Sciatic nerve (tissue), 2 donors: ENCODE measurements at regions of chr10 and their contacts with region 1.

Region 1: GRCh38 chr10:124612611-124613498 is 131.3 kb downstream of the FAM53B start:
- DNase-seq: no peak
- ATAC-seq: peak; percentile 68

Region 2: DNA sequence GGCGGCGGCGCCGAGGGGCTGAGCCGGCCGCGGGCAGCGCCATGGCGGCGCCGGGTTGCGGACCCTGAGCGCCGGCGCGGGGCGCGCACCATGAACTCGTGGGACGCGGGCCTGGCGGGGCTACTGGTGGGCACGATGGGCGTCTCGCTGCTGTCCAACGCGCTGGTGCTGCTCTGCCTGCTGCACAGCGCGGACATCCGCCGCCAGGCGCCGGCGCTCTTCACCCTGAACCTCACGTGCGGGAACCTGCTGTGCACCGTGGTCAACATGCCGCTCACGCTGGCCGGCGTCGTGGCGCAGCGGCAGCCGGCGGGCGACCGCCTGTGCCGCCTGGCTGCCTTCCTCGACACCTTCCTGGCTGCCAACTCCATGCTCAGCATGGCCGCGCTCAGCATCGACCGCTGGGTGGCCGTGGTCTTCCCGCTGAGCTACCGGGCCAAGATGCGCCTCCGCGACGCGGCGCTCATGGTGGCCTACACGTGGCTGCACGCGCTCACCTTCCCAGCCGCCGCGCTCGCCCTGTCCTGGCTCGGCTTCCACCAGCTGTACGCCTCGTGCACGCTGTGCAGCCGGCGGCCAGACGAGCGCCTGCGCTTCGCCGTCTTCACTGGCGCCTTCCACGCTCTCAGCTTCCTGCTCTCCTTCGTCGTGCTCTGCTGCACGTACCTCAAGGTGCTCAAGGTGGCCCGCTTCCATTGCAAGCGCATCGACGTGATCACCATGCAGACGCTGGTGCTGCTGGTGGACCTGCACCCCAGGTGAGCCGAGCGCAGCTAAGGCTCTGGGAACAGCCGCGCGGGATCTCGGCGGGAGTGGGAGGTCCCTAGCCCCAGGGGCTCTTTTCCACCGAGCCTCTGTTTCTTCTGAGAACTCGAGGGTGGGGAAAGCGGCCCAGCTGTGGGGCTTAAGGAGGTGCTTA is 946.3 kb before region 1 on chr10 and contains the start of gene GPR26:
- intact Hi-C with region 1: loop called (anchors 5 kb)
- DNase-seq: no peak
- ATAC-seq: no peak
- total RNA-seq, gene GPR26: not detected

Region 3: GRCh38 chr10:124323111-124323886 is 289.6 kb before region 1 on chr10:
- intact Hi-C with region 1: no loop called
- DNase-seq: no peak
- ATAC-seq: no peak

Region 4: GRCh38 chr10:124992462-124993344 is 379.8 kb after region 1 on chr10:
- intact Hi-C with region 1: no loop called
- DNase-seq: peak; percentile 83
- ATAC-seq: peak; percentile 86